Right lobe of liver (tissue), 6 donors: ENCODE measurements at regions of chr1 and their contacts with region 1.

Region 1: GRCh38 chr1:78617615-78618026 is 2.6 kb upstream of the IFI44L start:
- DNase-seq: peak; percentile 36 to 74 (median 67)
- ATAC-seq: peak; percentile 97 to 98 (median 98)
- H3K4me3 ChIP-seq: no peak overlapping the region
- H3K27ac ChIP-seq: no peak overlapping the region
- H3K4me1 ChIP-seq: no peaks in the 10 kb centered on the region
- H3K27me3 ChIP-seq: no peaks in the 10 kb centered on the region
- CTCF ChIP-seq: peak; percentile 87 to 94 (median 89)
- POLR2A ChIP-seq: no peak

Region 2: DNA sequence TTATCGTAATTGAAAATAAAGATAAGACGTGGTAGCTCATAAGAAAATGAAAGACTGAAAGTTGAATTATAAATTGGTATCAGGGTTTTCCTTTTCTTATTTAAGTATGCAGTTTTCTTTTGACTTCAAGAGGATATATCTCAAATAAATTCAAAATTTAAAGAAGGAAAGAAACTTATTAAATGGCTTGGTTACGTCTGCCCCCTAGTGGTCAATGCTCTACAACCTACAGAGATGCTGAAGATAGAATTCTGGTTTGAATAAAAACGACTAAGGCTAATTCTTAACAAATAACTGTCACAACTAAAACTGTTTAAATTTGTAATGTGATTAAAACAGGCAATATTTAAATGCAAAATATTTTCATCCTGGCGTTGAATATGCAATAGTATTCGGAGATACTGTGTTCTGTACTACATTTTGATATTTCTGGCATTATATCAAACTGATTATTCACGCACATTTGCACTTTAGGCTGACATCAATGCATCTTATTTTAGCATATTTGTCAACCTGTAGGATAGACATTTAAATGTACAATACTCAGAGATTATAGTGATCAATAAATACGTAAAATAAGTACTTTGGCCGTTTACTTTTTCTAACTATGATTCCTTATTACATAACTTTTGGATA is 58.8 kb after region 1 on chr1:
- intact Hi-C with region 1: loop called (anchors 5 kb)
- DNase-seq: peak in 1 of 3 donors; percentile 51
- ATAC-seq: peak; percentile 67 to 79 (median 78)
- H3K4me3 ChIP-seq: no peak overlapping the region
- H3K27ac ChIP-seq: no peak overlapping the region
- H3K4me1 ChIP-seq: no peaks in the 10 kb centered on the region
- H3K27me3 ChIP-seq: no peaks in the 10 kb centered on the region
- CTCF ChIP-seq: peak; percentile 78 to 87 (median 84)
- POLR2A ChIP-seq: no peak